ENCODE measurements at regions of chr3 and their contacts with region 1.

Region 1: DNA sequence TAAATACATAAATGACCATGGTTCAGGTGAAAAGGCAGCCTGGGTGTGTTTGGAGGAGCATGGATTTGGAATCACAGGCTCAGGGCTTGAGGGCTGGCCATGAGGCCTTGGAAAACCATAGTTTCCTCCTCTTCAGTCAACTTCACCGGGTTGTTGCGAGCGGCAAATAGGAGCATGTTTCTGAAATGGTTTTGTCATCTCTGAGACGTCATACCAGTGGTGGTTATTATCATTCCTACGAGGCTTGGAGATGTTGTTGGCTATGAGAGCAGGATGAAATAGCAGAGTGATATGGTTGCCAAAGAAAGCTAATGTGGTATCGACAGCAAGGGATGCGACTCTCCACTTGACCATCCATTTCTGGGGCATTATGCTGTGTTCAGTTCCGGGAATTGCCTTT is 21.8 kb upstream of the ETV5 start:
- DNase-seq: no peak
- H3K4me3 ChIP-seq: no peak overlapping the region
- H3K27ac ChIP-seq: no peak overlapping the region
- H3K4me1 ChIP-seq: peaks cover 2% of the 10 kb centered on the region
- H3K27me3 ChIP-seq: no peaks in the 10 kb centered on the region
- CTCF ChIP-seq: no peak
- EP300 ChIP-seq: no peak
- POLR2A ChIP-seq: no peak

Region 2: DNA sequence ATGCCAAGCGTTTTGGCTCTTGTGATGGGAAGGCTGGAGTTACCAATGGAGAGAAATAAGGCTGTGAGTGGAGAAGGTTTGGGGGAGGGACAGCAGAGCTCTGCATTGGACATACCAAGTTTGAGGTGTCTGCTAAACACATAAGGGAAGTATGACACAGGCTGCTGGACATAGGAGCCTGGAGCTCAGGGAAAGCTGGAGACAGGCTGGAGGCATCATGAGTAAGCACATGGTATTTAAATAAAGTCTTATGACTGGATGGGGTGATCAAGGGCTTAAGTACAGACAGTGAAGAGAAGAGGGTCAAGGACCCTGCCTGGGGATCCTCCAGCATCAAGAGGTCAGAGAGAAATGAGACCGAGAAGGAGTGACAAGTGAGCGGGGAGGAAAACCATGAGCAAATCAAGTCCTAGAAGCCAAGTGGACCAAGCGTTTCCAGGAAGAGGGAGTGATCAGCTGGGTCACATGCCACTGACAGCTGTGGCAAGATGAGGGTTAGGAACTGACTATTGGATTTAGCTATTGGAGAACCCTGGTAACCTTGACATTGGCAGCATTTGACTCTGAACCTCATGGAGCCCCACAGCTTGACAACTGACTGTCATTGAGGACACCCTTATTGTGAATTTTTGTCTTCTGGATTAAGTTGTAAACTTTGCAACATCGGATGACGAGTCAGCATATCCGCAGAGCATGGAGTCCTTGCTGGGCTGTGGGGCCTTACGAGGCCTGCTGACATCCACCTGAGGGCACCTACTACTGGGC is 56.8 kb after region 1 on chr3:
- intact Hi-C with region 1: loop called in 1 of 4 experiments (anchors 2 kb)
- DNase-seq: no peak
- H3K4me3 ChIP-seq: no peak overlapping the region
- H3K27ac ChIP-seq: no peak overlapping the region
- H3K4me1 ChIP-seq: no peaks in the 10 kb centered on the region
- H3K27me3 ChIP-seq: no peaks in the 10 kb centered on the region
- CTCF ChIP-seq: no peak
- EP300 ChIP-seq: no peak
- POLR2A ChIP-seq: no peak